Endothelial cell of umbilical vein (primary cell): ENCODE measurements at regions of chr4 and their contacts with region 1.

Region 1: DNA sequence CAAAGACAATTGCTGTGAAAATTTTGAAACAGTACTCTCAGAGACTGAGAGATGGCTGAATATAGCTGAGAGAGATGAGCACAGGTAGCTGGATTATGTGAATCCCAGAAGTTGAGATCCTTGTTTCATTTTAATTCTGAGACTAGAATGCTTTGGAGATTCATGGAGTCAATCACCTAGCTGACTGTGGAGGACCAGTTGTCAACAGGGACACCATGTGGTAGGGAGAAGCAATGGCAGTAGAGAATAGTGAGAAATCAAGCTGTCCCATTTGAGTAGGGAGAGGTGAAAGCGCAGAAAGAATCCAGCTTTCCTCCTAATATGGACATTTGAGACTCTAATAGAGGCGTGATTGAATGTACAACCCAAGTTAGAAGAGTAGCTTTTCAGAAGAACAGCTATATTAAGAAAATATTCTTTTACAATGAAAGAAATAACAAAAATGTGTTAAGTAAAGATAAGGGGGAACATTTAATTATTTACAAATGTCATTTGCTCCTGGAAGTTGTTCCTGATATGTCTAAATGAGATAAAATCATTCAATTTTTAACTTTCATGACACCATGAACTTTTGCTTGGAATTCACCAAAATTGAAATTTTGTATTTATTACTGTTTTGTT is 30.3 kb upstream of the GLRB start:
- DNase-seq: peak; percentile 71
- H3K4me3 ChIP-seq: no peak overlapping the region
- H3K27ac ChIP-seq: no peak overlapping the region
- H3K4me1 ChIP-seq: no peaks in the 10 kb centered on the region
- H3K27me3 ChIP-seq: no peaks in the 10 kb centered on the region
- CTCF ChIP-seq: peak; percentile 72 to 77
- POLR2A ChIP-seq: no peak

Region 2: DNA sequence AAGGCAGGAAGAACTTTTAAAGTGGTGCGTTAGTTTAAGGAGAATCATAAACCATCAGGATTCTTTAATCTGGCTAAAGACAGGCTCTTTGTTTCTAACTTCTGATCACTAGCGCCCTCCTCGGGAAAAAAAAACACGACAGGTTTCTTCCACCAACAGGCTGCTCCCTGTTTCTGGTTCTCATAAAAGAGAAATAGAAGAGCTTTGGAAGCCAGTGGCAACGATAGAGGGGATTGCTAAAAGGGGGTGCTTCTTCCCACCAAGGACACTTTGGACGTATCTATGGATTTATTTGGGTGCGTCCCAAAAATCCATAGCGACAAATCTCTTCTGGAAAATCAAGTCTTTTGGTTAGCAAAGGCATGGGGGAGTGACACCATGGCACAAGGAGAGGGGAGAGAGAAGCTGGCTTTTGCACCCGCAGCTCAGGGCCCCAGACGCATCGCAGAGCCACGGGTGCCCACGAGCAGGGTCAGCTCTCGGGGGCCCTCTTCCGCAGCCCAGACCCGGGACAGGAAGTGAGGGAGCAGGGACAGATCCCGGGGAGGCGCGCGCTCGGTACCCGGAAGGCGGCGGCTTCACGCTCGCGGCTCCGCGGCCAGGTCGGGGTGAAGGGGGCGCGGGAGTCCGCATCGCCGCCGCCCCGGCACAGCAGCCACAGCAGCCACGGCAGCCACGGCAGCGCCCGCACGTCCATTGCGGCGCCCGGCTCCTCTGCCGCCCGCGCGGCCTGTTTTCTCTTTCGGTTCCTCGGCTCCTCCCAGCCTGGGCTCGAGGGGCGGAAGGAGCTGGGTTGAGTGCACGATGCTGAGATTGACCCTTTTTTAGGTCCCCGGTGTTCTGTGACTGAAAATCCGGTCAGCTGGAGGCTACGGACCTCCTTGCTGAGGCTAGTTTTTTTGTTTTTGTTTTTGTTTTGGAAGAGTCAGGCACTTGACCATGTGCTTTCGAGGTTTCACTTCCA is 1092.2 kb before region 1 on chr4 and contains the start of gene CTSO:
- CTCF ChIA-PET with region 1: no interaction called
- POLR2A ChIA-PET with region 1: no interaction called
- dilution Hi-C with region 1: no loop called
- intact Hi-C with region 1: loop called (anchors 10 kb)
- DNase-seq: peak; percentile 88
- H3K4me3 ChIP-seq: peak within 1 kb of the TSS; percentile 54 to 86 (median 79)
- H3K27ac ChIP-seq: peak within 1 kb of the TSS; percentile 92
- H3K4me1 ChIP-seq: peaks cover 6% of the 10 kb centered on the region
- H3K27me3 ChIP-seq: no peaks in the 10 kb centered on the region
- CTCF ChIP-seq: peak in 1 of 2 donors; percentile 58
- POLR2A ChIP-seq: peak; percentile 83
- total RNA-seq, gene CTSO: 6.7 and 7.9 TPM in 2 replicates

Region 3: GRCh38 chr4:156294577-156294976 is 751.0 kb before region 1 on chr4:
- CTCF ChIA-PET with region 1: no interaction called
- POLR2A ChIA-PET with region 1: no interaction called
- dilution Hi-C with region 1: no loop called
- intact Hi-C with region 1: loop called (anchors 10 kb)
- DNase-seq: peak; percentile 43
- H3K4me3 ChIP-seq: no peak overlapping the region
- H3K27ac ChIP-seq: peak overlapping the region; percentile 29
- H3K4me1 ChIP-seq: peaks cover 7% of the 10 kb centered on the region
- H3K27me3 ChIP-seq: no peaks in the 10 kb centered on the region
- CTCF ChIP-seq: no peak
- POLR2A ChIP-seq: no peak

Region 4: DNA sequence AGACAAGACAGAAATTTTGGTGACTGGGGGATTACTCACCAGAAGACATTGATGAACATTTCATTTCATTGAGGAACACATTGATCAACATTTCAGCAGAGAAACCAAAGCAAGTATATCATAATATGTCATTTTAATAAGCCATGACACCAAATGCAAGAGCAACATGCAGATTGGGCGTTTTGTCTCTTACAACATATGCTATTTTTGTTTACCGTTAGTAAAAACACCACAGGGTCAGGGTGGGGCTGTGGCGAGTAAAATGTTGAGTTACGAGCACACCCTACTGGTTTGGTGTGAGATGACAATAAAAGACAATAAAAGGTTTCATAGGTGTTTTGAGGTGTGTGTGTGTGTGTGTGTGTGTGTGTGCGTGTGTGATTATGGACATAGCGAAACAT is 368.5 kb before region 1 on chr4:
- CTCF ChIA-PET with region 1: no interaction called
- POLR2A ChIA-PET with region 1: no interaction called
- dilution Hi-C with region 1: no loop called
- intact Hi-C with region 1: loop called (anchors 10 kb)
- DNase-seq: peak; percentile 19
- H3K4me3 ChIP-seq: no peak overlapping the region
- H3K27ac ChIP-seq: no peak overlapping the region
- H3K4me1 ChIP-seq: no peaks in the 10 kb centered on the region
- H3K27me3 ChIP-seq: no peaks in the 10 kb centered on the region
- CTCF ChIP-seq: peak in 1 of 2 donors; percentile 8
- POLR2A ChIP-seq: no peak

Region 5: DNA sequence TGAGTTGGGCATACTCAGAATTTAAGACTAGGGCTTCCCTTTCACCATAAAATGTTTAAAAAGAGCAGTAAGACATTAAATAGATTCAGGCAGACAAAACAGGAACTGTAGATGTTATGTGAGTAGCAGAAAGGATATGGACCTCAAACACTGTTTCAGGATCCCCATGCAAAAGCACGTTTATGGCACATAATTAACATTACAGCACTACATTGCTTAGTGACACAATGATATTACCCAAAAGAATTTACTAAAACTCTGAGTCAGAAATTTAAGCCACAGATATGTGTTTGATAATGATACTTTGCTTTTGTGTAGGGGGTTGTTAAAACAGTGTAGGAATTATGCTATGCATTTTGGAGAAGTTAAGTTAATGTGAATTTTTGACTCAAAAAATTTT is 340.3 kb before region 1 on chr4:
- CTCF ChIA-PET with region 1: no interaction called
- POLR2A ChIA-PET with region 1: no interaction called
- dilution Hi-C with region 1: no loop called
- intact Hi-C with region 1: no loop called
- DNase-seq: no peak
- H3K4me3 ChIP-seq: no peak overlapping the region
- H3K27ac ChIP-seq: no peak overlapping the region
- H3K4me1 ChIP-seq: no peaks in the 10 kb centered on the region
- H3K27me3 ChIP-seq: no peaks in the 10 kb centered on the region
- CTCF ChIP-seq: no peak
- POLR2A ChIP-seq: no peak

Region 6: DNA sequence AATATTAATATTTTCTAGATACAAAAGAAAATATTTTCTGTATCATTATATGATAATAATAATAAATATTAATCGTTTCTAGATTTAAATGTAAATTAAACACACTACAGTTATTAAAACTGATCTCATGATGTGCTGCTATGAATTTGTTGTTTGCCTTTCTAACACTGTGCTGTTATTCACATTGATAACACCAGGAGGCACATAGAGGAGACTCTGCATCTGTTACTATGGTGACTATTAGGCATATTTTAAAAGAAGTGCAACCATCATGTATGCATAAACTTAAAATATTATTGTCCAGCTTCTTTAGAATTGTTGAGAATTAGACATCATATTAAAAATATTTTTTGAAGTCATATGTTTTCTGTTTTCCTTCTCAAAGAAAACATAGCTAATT is 62.3 kb before region 1 on chr4:
- CTCF ChIA-PET with region 1: interaction called, 112 read pairs
- POLR2A ChIA-PET with region 1: no interaction called
- dilution Hi-C with region 1: no loop called
- intact Hi-C with region 1: loop called (anchors 1 kb)
- DNase-seq: peak; percentile 44
- H3K4me3 ChIP-seq: no peak overlapping the region
- H3K27ac ChIP-seq: no peak overlapping the region
- H3K4me1 ChIP-seq: no peaks in the 10 kb centered on the region
- H3K27me3 ChIP-seq: no peaks in the 10 kb centered on the region
- CTCF ChIP-seq: peak; percentile 23 to 43
- POLR2A ChIP-seq: no peak

Region 7: DNA sequence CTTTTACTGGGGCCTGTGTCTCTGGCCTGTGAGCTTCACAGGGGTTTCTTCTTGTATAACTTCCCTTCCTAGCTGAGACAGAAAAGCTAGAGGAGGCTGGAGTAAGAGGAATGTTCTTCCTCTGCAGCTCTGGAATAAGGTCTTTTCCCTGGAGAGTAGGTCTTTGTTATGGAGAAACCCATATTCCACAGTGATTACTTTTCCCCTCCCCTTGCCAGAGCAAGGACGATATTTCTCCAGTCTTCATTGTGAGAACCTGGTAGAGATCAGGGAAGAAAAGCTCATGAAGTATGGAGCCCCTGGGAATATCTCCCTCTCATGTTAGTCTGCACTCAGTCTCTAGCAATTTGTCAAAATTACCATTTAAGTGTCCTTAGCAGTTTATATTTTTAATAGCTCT is 11.6 kb after region 1 on chr4:
- CTCF ChIA-PET with region 1: interaction called, 12 read pairs
- POLR2A ChIA-PET with region 1: no interaction called
- dilution Hi-C with region 1: no loop called
- intact Hi-C with region 1: no loop called
- DNase-seq: no peak
- H3K4me3 ChIP-seq: no peak overlapping the region
- H3K27ac ChIP-seq: no peak overlapping the region
- H3K4me1 ChIP-seq: peaks cover 8% of the 10 kb centered on the region
- H3K27me3 ChIP-seq: no peaks in the 10 kb centered on the region
- CTCF ChIP-seq: no peak
- POLR2A ChIP-seq: no peak

Region 8: DNA sequence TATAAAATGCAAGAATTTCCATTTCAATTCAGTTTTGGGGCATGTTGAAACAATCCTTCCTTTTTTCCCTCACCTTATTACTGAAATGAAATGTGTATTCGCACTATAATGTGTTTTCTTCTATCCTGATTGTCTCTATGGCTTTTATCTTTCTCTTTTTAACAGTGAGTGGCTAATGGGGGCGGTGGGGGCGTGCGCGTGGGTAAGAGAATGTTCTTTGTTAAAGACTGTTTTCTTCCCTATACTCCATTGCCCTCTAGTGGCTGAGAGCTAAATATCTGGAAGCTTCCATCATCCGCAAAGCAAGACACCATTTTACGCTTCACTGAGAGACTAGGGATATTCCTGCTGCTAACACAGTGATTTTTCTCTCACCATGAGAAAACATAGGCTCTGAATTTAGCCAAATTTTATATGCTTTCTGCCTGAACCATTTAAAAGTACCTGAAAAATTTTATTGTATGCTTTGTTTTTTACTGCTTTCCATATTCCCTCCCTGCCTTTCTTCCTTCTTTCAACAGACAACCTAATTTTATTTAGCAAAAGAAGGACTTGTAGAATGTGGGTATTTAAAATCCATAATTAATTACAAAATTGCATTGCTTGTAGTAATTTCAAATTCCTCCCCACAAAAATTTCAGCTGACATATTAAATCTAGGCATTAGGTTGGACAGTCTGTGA is 933.2 kb after region 1 on chr4:
- CTCF ChIA-PET with region 1: interaction called, 6 read pairs
- POLR2A ChIA-PET with region 1: no interaction called
- dilution Hi-C with region 1: no loop called
- intact Hi-C with region 1: loop called (anchors 5 kb)
- DNase-seq: peak; percentile 82
- H3K4me3 ChIP-seq: peak overlapping the region in 2 of 3 experiments; percentile 18 to 75
- H3K27ac ChIP-seq: peak overlapping the region; percentile 44
- H3K4me1 ChIP-seq: peaks cover 29% of the 10 kb centered on the region
- H3K27me3 ChIP-seq: no peaks in the 10 kb centered on the region
- CTCF ChIP-seq: peak; percentile 61 to 67
- POLR2A ChIP-seq: no peak